ENCODE measurements at regions of chr15 and their contacts with region 1.

Region 1: GRCh38 chr15:40941528-40942336 is 11.5 kb upstream of the CHAC1 start:
- DNase-seq: peak; percentile 89
- ATAC-seq: peak; percentile 86

Region 2: DNA sequence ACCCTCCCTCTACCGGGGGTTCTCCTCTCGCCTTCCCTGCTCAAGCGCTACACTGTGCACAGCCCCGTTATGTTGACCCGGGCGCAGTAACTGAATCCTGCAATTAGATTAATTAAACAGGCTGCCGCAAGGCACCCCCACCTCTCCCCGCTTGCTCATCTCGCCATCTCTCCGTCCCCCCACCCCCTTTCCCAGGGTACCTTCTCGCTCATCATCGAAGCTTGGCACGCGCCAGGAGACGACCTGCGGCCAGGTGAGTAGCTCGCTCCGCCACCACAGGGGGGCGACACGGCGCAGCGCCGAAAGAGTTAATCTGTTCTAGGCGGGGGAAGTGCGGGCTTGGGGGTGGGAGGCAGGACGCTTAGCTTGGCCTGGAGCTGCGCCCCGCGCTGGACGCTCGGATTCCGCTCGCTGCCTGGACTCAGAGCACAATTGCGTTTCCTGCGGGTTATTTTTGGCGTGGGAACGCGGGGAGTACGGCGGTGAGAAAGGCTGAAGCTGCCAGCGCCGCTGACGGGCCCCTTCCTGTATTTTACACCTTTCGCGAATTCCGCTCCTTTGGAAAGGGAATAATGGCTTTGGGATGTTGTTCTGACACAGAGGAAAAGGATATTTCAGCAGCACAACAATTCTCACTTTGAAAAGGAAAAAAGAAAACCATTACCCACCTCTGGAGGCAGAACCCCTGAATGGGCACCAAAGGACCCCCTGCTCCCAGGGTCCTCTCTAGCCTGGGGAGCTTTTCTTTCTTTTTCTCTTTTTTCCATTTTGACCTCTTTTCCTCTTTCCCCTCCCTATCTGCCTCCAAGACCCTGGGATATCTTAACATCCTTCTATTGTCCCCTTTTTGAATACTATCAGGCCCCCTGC is 11.1 kb before region 1 on chr15:
- intact Hi-C with region 1: loop called (anchors 1 kb)
- DNase-seq: no peak
- ATAC-seq: peak; percentile 38

Region 3: DNA sequence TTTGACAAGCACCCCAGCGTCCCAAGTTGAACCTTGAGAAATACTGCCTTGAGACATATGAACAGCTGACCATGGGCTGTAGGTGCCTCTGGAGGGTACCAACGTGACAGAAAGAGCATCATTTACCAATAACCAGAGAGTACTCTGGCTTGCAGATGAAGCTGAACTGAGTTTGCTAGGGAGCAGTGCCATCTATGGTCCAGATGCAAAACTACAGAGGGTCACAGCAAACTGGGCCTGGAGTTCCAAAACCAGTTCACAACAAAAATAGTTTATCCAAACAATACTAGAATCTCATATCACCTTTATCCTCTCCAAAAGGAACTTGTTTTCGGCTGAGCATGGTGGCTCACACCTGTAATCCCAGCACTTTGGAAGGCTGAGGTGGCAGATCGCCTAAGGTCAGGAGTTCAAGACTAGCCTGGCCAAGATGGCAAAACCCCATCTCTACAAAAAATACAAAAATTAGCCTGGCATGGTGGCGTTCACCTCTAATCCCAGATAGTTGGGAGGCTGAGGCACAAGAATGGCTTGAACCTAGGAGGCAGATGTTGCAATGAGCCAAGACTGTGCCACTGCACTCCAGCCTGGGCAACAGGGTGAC is 80.9 kb after region 1 on chr15:
- intact Hi-C with region 1: loop called (anchors 2 kb)
- DNase-seq: no peak
- ATAC-seq: no peak

Region 4: DNA sequence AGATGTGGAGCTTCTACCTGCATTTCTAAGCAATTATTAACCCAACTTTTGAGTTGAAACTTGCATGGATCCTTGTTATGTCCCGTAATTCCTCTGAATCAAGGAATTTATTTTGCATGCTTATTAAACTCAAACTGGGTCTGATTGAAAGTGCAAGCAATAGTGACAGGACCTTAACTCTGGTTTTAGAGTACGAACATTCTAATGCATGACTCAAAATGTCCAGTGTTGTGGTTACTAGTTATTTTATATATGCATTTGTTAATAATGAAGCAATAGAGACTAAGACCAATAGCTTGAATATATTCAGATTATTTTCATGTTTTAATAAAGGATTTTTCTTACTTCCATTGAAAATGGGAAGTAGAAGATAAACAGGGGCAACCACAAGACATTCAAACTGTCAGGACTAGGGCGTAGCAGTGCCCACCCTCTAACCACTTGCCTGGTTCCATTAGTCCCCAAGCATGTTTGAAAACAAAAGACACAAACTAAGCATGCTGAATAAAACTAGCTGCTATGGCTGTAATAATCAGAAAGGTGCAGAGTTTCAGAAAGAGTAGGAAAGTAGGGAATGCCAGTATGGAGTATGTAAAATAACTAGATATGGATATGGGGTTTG is 362.5 kb after region 1 on chr15:
- intact Hi-C with region 1: no loop called
- DNase-seq: no peak
- ATAC-seq: no peak

Measured in Right ventricle myocardium inferior (tissue), 1 donor.